MCF 10A (cell line): ENCODE measurements at regions of chr5 and their contacts with region 1.

Region 1: DNA sequence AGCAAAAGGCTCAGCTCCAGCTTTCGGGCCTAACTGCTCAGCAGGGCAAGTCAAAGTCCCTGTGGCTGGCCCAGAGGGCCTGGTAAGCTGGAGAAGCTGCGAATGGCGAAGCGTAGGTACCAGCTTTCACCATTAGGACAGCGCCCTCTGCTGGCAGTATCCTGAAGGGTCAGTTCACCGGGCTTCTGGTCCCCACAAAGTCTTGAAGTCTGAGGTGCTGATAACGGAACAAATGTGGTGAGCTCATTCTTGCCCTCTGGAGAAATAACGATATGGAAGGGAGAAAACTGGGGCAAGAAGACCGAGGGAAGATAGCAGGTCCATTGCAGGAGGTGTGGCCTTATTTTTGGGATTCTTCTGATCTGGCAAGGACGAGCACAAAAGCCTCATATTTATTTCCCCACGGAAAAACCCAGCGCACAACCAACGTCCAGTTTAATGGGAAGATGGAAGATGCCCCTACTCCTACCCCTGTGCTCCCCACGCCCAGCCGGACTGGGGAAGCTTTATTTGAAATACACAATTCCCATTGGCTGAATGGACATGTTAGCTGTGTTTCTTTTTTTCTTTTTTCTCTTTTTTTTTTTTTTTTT is 7.2 kb downstream of the SOWAHA start:
- DNase-seq: peak; percentile 96
- H3K4me3 Mint-ChIP-seq: no peak overlapping the region
- H3K27ac Mint-ChIP-seq: no peak overlapping the region
- H3K4me1 Mint-ChIP-seq: peaks cover 8% of the 10 kb centered on the region
- H3K27me3 Mint-ChIP-seq: no peaks in the 10 kb centered on the region
- CTCF ChIP-seq: peak; percentile 97

Region 2: GRCh38 chr5:132661231-132662003 is 158.8 kb before region 1 on chr5:
- CTCF ChIA-PET with region 1: interaction called, 4 read pairs
- POLR2A ChIA-PET with region 1: no interaction called
- intact Hi-C with region 1: loop called (anchors 1 kb)
- DNase-seq: peak; percentile 28
- H3K4me3 Mint-ChIP-seq: no peak overlapping the region
- H3K27ac Mint-ChIP-seq: peak overlapping the region; percentile 21
- H3K4me1 Mint-ChIP-seq: no peaks in the 10 kb centered on the region
- H3K27me3 Mint-ChIP-seq: no peaks in the 10 kb centered on the region
- CTCF ChIP-seq: no peak

Region 3: GRCh38 chr5:132777209-132778069 is 42.8 kb before region 1 on chr5 and contains the start of gene SEPTIN8:
- CTCF ChIA-PET with region 1: interaction called, 26 read pairs
- POLR2A ChIA-PET with region 1: interaction called, 6 read pairs
- intact Hi-C with region 1: loop called (anchors 1 kb)
- DNase-seq: peak; percentile 55
- H3K4me3 Mint-ChIP-seq: peak within 1 kb of the TSS; percentile 73
- H3K27ac Mint-ChIP-seq: peak within 1 kb of the TSS; percentile 28
- H3K4me1 Mint-ChIP-seq: peaks cover 32% of the 10 kb centered on the region
- H3K27me3 Mint-ChIP-seq: no peaks in the 10 kb centered on the region
- CTCF ChIP-seq: no peak
- total RNA-seq, gene SEPTIN8: 34.8 and 53.1 TPM in 2 replicates

Region 4: GRCh38 chr5:132797651-132798050 is 22.6 kb before region 1 on chr5:
- CTCF ChIA-PET with region 1: interaction called, 24 read pairs
- POLR2A ChIA-PET with region 1: interaction called, 3 read pairs
- intact Hi-C with region 1: no loop called
- DNase-seq: no peak
- H3K4me3 Mint-ChIP-seq: no peak overlapping the region
- H3K27ac Mint-ChIP-seq: no peak overlapping the region
- H3K4me1 Mint-ChIP-seq: peaks cover 6% of the 10 kb centered on the region
- H3K27me3 Mint-ChIP-seq: no peaks in the 10 kb centered on the region
- CTCF ChIP-seq: no peak